ENCODE measurements at regions of chr21 and their contacts with region 1.

Region 1: DNA sequence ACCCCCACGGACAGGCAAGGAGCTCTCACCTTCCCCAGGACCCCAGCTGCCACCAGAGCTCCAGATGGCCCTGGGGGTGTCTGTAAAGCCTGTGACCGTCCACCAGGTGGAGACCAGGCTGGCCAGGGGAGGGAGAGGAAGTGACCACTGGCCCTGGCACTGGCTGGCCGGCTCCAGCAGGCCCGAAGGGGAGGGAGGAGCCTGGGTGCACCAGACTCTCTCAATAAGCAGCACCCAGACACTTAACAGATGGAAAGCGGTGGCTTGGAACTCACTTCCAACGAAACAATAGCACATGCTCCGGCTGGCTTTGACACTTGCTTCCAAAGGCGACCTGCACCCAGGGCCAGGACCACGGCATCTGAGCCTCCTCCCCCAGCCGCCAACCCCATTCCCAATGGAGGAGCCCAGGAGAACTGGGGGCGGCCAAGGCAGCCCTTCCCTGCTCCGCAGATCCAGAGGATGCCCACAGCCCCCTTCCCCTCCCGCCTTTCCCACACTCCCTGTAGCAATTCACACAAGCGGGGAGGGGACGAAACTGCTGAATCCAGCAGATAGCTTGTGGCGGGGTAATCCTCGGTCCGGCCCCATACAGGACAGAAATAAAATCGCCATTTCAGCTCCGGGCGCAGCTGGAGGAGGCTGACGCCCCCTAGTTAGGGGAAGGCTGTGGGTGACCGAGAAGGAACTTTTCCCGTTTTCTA is 742 bp upstream of the PDE9A start:
- DNase-seq: peak; percentile 63 to 65
- ATAC-seq: peak; percentile 79 to 90 (median 86)
- H3K4me3 ChIP-seq: peak overlapping the region in 9 of 10 donors; percentile 7 to 74 (median 60)
- H3K27ac ChIP-seq: peak overlapping the region in 7 of 10 donors; percentile 14 to 73 (median 62)
- H3K4me1 ChIP-seq: peaks cover 0 to 39% (median 27%) of the 10 kb centered on the region in 9 donors
- H3K27me3 ChIP-seq: peaks cover 0 to 54% (median 34%) of the 10 kb centered on the region in 7 donors
- CTCF ChIP-seq: peak; percentile 31 to 72 (median 58)

Region 2: GRCh38 chr21:42593007-42593806 is 59.5 kb before region 1 on chr21:
- intact Hi-C with region 1: loop called in 3 of 10 experiments (anchors 2 to 10 kb)
- DNase-seq: peak; percentile 60 to 69
- ATAC-seq: peak; percentile 88 to 97 (median 92)
- H3K4me3 ChIP-seq: peak overlapping the region in 2 of 10 donors; percentile 16 to 22
- H3K27ac ChIP-seq: no peak overlapping the region
- H3K4me1 ChIP-seq: peaks cover 0 to 11% (median 8%) of the 10 kb centered on the region in 9 donors
- H3K27me3 ChIP-seq: peaks cover 4 to 24% (median 12%) of the 10 kb centered on the region in 7 donors
- CTCF ChIP-seq: peak; percentile 79 to 91 (median 84)

Region 3: GRCh38 chr21:42670884-42671283 is 18.2 kb after region 1 on chr21:
- intact Hi-C with region 1: loop called in 1 of 10 experiments (anchors 2 kb)
- DNase-seq: no peak
- ATAC-seq: no peak
- H3K4me3 ChIP-seq: no peak overlapping the region
- H3K27ac ChIP-seq: no peak overlapping the region
- H3K4me1 ChIP-seq: peaks cover 0 to 37% (median 19%) of the 10 kb centered on the region in 9 donors
- H3K27me3 ChIP-seq: peaks cover 0 to 5% (median 3%) of the 10 kb centered on the region in 7 donors
- CTCF ChIP-seq: no peak

Region 4: GRCh38 chr21:42724226-42724920 is 71.7 kb after region 1 on chr21:
- intact Hi-C with region 1: loop called in 1 of 10 experiments (anchors 5 kb)
- DNase-seq: peak in 1 of 2 donors; percentile 44
- ATAC-seq: peak; percentile 36 to 85 (median 78)
- H3K4me3 ChIP-seq: no peak overlapping the region
- H3K27ac ChIP-seq: peak overlapping the region in 8 of 10 donors; percentile 5 to 79 (median 58)
- H3K4me1 ChIP-seq: peaks cover 0 to 46% (median 34%) of the 10 kb centered on the region in 9 donors
- H3K27me3 ChIP-seq: peaks cover 0 to 6% (median 0%) of the 10 kb centered on the region in 7 donors
- CTCF ChIP-seq: no peak

Region 5: DNA sequence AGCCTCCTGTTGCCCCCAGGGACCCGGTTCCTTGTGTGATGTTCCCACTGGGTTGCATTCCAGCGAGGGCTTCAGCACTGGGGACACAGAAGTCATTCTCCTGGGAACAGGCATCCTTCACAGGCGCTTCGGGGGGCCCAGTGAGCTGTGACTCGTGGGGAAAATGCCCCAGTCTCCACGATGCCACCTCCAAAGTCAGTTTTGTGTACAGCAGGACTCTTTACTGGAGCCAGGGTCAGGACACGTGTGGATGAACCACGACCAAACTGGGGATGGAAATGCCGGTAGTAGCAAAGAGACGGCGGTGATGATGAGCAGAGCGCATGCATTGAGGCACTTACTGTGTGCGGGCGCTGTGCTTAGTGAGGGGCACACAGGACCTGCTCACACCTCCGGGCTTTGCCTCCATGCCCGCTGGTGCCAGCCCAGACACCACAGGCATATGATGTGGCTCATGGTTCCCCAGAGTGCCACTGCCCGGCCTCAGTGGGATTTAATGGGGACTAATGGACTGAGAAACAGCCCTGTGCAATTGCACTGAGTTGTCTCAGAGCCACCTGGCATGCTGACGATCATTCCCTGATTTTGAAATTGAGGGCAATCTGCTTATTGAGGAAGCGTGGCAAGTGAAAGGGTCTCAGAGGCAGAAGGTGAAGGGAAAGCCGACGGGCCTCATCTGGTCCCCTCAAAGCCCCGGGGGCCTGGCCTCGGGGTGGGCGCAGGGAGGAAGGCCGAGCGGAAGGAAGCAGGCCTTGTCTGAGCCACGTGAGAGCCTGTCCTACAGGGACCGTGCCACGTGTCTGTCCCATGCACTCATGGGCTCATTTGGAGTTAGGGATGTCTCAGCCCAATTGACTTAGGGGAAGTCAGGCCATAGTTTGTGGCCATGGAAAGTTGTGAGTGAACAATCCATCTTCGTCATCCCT is 92.1 kb after region 1 on chr21:
- intact Hi-C with region 1: loop called in 1 of 10 experiments (anchors 5 kb)
- DNase-seq: no peak
- ATAC-seq: peak in 1 of 8 donors; percentile 23
- H3K4me3 ChIP-seq: no peak overlapping the region
- H3K27ac ChIP-seq: peak overlapping the region in 1 of 10 donors; percentile 77
- H3K4me1 ChIP-seq: peaks cover 0 to 41% (median 19%) of the 10 kb centered on the region in 9 donors
- H3K27me3 ChIP-seq: peaks cover 0 to 4% (median 0%) of the 10 kb centered on the region in 7 donors
- CTCF ChIP-seq: no peak

Region 6: DNA sequence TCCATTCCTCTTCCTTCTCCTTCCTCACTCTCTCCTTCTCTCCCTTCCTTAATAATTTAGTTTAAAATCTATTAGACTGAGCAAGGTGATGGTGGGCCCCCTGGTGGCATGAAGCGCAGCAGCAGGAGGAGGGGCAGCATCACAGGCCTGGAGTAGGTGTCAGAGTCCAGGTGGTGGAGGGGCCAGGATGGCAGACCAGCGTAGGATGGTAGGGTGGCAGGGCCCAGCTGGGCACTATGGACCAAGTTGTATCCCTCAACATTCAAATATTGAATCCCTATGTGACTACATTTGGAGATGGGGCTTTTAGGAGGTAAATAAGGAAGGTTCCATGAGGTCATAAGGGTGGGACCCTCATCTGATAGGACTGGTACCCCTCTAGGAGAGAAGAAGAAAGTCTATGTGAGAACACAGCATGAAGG is 165.7 kb after region 1 on chr21:
- intact Hi-C with region 1: loop called in 9 of 10 experiments (anchors 2 to 10 kb)
- DNase-seq: peak; percentile 23 to 61
- ATAC-seq: peak in 7 of 8 donors; percentile 62 to 86 (median 77)
- H3K4me3 ChIP-seq: no peak overlapping the region
- H3K27ac ChIP-seq: no peak overlapping the region
- H3K4me1 ChIP-seq: no peaks in the 10 kb centered on the region
- H3K27me3 ChIP-seq: peaks cover 0 to 28% (median 8%) of the 10 kb centered on the region in 7 donors
- CTCF ChIP-seq: peak; percentile 79 to 96 (median 91)

Region 7: GRCh38 chr21:42858185-42858847 is 205.6 kb after region 1 on chr21:
- intact Hi-C with region 1: no loop called
- DNase-seq: no peak
- ATAC-seq: no peak
- H3K4me3 ChIP-seq: no peak overlapping the region
- H3K27ac ChIP-seq: no peak overlapping the region
- H3K4me1 ChIP-seq: peaks cover 0 to 16% (median 7%) of the 10 kb centered on the region in 9 donors
- H3K27me3 ChIP-seq: no peaks in the 10 kb centered on the region
- CTCF ChIP-seq: no peak